H1 (cell line): ENCODE measurements at regions of chr15 and their contacts with region 1.

Region 1: DNA sequence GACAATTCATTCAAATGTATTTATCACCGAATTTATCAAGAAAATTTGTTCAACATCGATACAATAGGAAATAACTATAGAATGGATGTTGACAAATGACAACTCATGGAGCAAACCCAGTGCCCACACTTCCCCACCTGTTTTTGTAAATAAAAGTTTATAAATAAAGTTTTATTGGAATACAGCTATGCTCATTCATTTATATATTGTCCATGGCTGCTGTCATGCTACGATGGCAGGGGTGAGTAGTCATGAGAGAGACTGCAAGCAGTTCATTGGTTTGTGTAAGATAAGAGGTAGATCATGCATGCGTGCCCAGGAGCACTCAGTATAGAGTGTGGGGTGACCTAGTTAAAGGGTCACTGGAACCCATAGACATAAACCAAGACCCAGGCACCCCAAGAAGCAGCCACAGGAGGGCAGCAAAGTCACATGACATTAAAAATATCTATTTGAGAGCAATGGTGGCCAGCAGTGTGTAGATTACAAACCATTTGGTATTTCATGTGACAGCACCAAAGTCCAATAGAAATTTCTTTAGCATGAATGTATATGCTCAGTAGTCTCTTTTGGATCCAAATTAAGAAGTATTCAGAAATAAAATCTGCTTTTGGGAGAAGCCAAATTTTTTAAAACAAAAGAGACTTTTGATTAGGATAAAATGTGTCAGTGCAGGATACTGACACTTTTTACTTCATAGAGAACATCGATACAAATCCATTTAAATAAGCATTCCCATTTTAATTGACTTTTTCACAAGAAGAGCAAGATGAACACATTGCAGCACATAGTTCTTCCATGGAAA is 794.8 kb downstream of the MCTP2 start:
- DNase-seq: peak in 1 of 2 experiments; percentile 79
- H3K4me3 ChIP-seq: no peak overlapping the region
- H3K27ac ChIP-seq: no peak overlapping the region
- H3K4me1 ChIP-seq: no peaks in the 10 kb centered on the region
- H3K27me3 ChIP-seq: no peaks in the 10 kb centered on the region
- CTCF ChIP-seq: peak; percentile 11 to 65 (median 62)
- EP300 ChIP-seq: no peak
- POLR2A ChIP-seq: no peak
- RAD21 ChIP-seq: peak; percentile 84 to 89

Region 2: GRCh38 chr15:94582369-94582768 is 443.8 kb before region 1 on chr15:
- CTCF ChIA-PET with region 1: interaction called, 26 read pairs
- POLR2A ChIA-PET with region 1: no interaction called
- DNase-seq: peak; percentile 31 to 59
- H3K4me3 ChIP-seq: no peak overlapping the region
- H3K27ac ChIP-seq: no peak overlapping the region
- H3K4me1 ChIP-seq: peaks cover 0 to 2% (median 0%) of the 10 kb centered on the region in 4 experiments; a peak in 1 of 7 replicates
- H3K27me3 ChIP-seq: no peaks in the 10 kb centered on the region
- CTCF ChIP-seq: peak; percentile 67 to 82 (median 80)
- EP300 ChIP-seq: no peak
- POLR2A ChIP-seq: no peak
- RAD21 ChIP-seq: peak; percentile 93 to 95

Region 3: GRCh38 chr15:95009635-95010034 is 16.5 kb before region 1 on chr15:
- CTCF ChIA-PET with region 1: interaction called, 16 read pairs
- POLR2A ChIA-PET with region 1: no interaction called
- DNase-seq: no peak
- H3K4me3 ChIP-seq: no peak overlapping the region
- H3K27ac ChIP-seq: no peak overlapping the region
- H3K4me1 ChIP-seq: no peaks in the 10 kb centered on the region
- H3K27me3 ChIP-seq: no peaks in the 10 kb centered on the region
- CTCF ChIP-seq: no peak
- EP300 ChIP-seq: no peak
- POLR2A ChIP-seq: no peak
- RAD21 ChIP-seq: no peak

Region 4: GRCh38 chr15:95259513-95259912 is 233.4 kb after region 1 on chr15:
- CTCF ChIA-PET with region 1: interaction called, 28 read pairs
- POLR2A ChIA-PET with region 1: no interaction called
- DNase-seq: peak; percentile 7 to 61
- H3K4me3 ChIP-seq: no peak overlapping the region
- H3K27ac ChIP-seq: no peak overlapping the region
- H3K4me1 ChIP-seq: peaks cover 0 to 6% (median 0%) of the 10 kb centered on the region in 4 experiments; a peak in 2 of 7 replicates
- H3K27me3 ChIP-seq: peaks cover 0 to 1% (median 0%) of the 10 kb centered on the region in 4 experiments; a peak in 1 of 7 replicates
- CTCF ChIP-seq: peak; percentile 59 to 77 (median 74)
- EP300 ChIP-seq: no peak
- POLR2A ChIP-seq: no peak
- RAD21 ChIP-seq: peak; percentile 94 to 96

Region 5: GRCh38 chr15:95291898-95292472 is 265.9 kb after region 1 on chr15:
- CTCF ChIA-PET with region 1: interaction called, 27 read pairs
- POLR2A ChIA-PET with region 1: no interaction called
- DNase-seq: no peak
- H3K4me3 ChIP-seq: no peak overlapping the region
- H3K27ac ChIP-seq: no peak overlapping the region
- H3K4me1 ChIP-seq: peaks cover 0 to 7% (median 4%) of the 10 kb centered on the region in 4 experiments; a peak in 5 of 7 replicates
- H3K27me3 ChIP-seq: no peaks in the 10 kb centered on the region
- CTCF ChIP-seq: peak in 2 of 3 experiments; percentile 48 to 77; a peak in 3 of 4 replicates
- EP300 ChIP-seq: no peak
- POLR2A ChIP-seq: no peak
- RAD21 ChIP-seq: peak; percentile 40 to 48